ENCODE measurements at regions of chr20 and their contacts with region 1.

Region 1: GRCh38 chr20:49936153-49937027 is at the start of gene RNF114:
- DNase-seq: peak; percentile 80 to 97 (median 87)
- ATAC-seq: peak; percentile 90 to 92
- H3K4me3 Mint-ChIP-seq: peak within 1 kb of the TSS; percentile 92 to 99 (median 98)
- H3K27ac Mint-ChIP-seq: peak within 1 kb of the TSS; percentile 93 to 98 (median 96)
- H3K4me1 Mint-ChIP-seq: peaks cover 32 to 63% (median 57%) of the 10 kb centered on the region in 4 donors
- H3K27me3 Mint-ChIP-seq: no peaks in the 10 kb centered on the region
- polyA plus RNA-seq, gene RNF114: 123 to 133 (median 123) TPM

Region 2: GRCh38 chr20:49812463-49813304 is 123.7 kb before region 1 on chr20 and contains the start of gene SLC9A8:
- POLR2A ChIA-PET with region 1: interaction called, 10 read pairs
- DNase-seq: peak; percentile 74 to 89 (median 82)
- ATAC-seq: peak; percentile 90 to 92
- H3K4me3 Mint-ChIP-seq: peak within 1 kb of the TSS; percentile 90 to 96 (median 94)
- H3K27ac Mint-ChIP-seq: peak within 1 kb of the TSS; percentile 96 to 99 (median 98)
- H3K4me1 Mint-ChIP-seq: peaks cover 17 to 43% (median 32%) of the 10 kb centered on the region in 4 donors
- H3K27me3 Mint-ChIP-seq: no peaks in the 10 kb centered on the region
- polyA plus RNA-seq, gene SLC9A8: 4.7 to 9.0 (median 6.0) TPM

Region 3: DNA sequence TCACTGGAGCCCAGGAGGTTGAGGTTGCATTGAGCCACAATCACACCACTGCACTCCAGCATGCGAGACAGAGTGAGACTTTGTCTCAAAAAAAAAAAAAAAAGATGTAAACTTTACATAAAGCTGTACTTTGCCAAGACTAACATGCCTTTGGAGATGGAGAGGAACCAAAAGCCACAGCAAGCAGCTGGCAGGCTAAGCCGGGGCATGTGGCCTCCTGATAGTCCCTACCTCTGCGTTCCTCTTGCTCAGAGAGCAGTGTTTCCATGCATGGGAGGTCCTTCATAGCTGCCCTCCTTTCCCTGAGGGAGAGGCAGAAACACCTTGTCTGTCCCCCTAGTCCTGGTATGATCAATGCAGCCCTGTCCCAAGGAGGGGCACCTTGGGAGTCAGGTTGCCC is 56.2 kb before region 1 on chr20:
- POLR2A ChIA-PET with region 1: no interaction called
- DNase-seq: no peak
- ATAC-seq: no peak
- H3K4me3 Mint-ChIP-seq: no peak overlapping the region
- H3K27ac Mint-ChIP-seq: peak overlapping the region in 3 of 10 donors; percentile 31 to 57 (median 31)
- H3K4me1 Mint-ChIP-seq: peaks cover 0 to 2% (median 0%) of the 10 kb centered on the region in 4 donors
- H3K27me3 Mint-ChIP-seq: no peaks in the 10 kb centered on the region

Region 4: GRCh38 chr20:49915378-49916145 is 20.8 kb before region 1 on chr20 and contains the start of gene SPATA2:
- POLR2A ChIA-PET with region 1: interaction called, 30 read pairs
- DNase-seq: peak; percentile 84 to 100 (median 92)
- ATAC-seq: peak; percentile 79 to 81
- H3K4me3 Mint-ChIP-seq: peak within 1 kb of the TSS; percentile 97 to 99 (median 98)
- H3K27ac Mint-ChIP-seq: peak within 1 kb of the TSS; percentile 98 to 100 (median 100)
- H3K4me1 Mint-ChIP-seq: peaks cover 17 to 50% (median 45%) of the 10 kb centered on the region in 4 donors
- H3K27me3 Mint-ChIP-seq: no peaks in the 10 kb centered on the region
- polyA plus RNA-seq, gene SPATA2: 1.7 to 5.7 (median 2.0) TPM

Region 5: GRCh38 chr20:49956686-49957085 is 20.3 kb after region 1 on chr20:
- POLR2A ChIA-PET with region 1: no interaction called
- DNase-seq: no peak
- ATAC-seq: no peak
- H3K4me3 Mint-ChIP-seq: no peak overlapping the region
- H3K27ac Mint-ChIP-seq: peak overlapping the region in 2 of 10 donors; percentile 46 to 87
- H3K4me1 Mint-ChIP-seq: peaks cover 0 to 4% (median 1%) of the 10 kb centered on the region in 4 donors
- H3K27me3 Mint-ChIP-seq: no peaks in the 10 kb centered on the region

Region 6: GRCh38 chr20:49989234-49990065 is 53.1 kb after region 1 on chr20:
- POLR2A ChIA-PET with region 1: no interaction called
- DNase-seq: no peak
- ATAC-seq: no peak
- H3K4me3 Mint-ChIP-seq: no peak overlapping the region
- H3K27ac Mint-ChIP-seq: peak overlapping the region in 1 of 10 donors; percentile 20
- H3K4me1 Mint-ChIP-seq: peaks cover 0 to 5% (median 2%) of the 10 kb centered on the region in 4 donors
- H3K27me3 Mint-ChIP-seq: no peaks in the 10 kb centered on the region

Region 7: GRCh38 chr20:50115591-50116372 is 179.4 kb after region 1 on chr20:
- POLR2A ChIA-PET with region 1: interaction called, 19 read pairs
- DNase-seq: peak; percentile 82 to 94 (median 88)
- ATAC-seq: peak; percentile 76 to 79
- H3K4me3 Mint-ChIP-seq: peak overlapping the region; percentile 84 to 98 (median 92)
- H3K27ac Mint-ChIP-seq: peak overlapping the region; percentile 85 to 97 (median 94)
- H3K4me1 Mint-ChIP-seq: peaks cover 34 to 56% (median 54%) of the 10 kb centered on the region in 4 donors
- H3K27me3 Mint-ChIP-seq: no peaks in the 10 kb centered on the region